ENCODE measurements at regions of chr1 and their contacts with region 1.

Region 1: DNA sequence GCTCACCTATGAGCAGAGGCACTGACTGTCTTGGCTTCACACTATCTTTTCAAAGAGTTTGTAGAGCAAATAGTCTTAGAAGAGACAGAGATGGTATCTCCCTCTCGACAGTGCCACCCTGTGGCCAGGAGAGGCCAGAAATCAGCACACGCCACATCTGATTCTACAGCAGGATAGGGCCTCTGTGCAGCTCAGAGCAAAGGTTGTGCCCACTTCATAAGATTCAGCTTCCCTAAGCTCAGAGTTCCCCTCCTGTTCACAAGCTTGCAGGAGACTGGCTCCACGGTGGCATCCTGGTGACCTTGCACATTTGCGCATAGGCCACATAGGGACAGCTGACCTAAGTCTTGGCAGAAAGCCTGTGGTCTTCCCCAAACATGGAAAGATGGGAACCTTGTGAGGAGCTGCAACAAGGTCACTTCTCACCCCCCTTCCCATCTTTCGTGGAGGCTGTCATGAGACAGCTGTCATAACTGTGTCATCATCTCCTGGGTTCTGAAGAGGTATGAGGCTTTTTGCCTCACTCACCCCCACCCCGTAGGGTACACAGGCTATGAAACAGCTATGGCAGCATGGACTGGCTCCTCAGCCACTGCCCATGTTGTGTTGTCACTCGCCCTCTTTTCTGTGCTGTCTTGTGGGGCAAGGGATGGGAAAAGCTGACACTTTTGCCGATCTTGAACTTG is 3.0 kb downstream of the ITLN2 start:
- DNase-seq: peak; percentile 68
- H3K4me3 ChIP-seq: no peak overlapping the region
- H3K27ac ChIP-seq: no peak overlapping the region
- H3K4me1 ChIP-seq: no peaks in the 10 kb centered on the region
- H3K27me3 ChIP-seq: peaks cover 4 to 10% of the 10 kb centered on the region in 2 experiments
- CTCF ChIP-seq: peak; percentile 73 to 77
- POLR2A ChIP-seq: no peak

Region 2: GRCh38 chr1:160675641-160676410 is 275.8 kb before region 1 on chr1:
- CTCF ChIA-PET with region 1: interaction called, 17 read pairs
- POLR2A ChIA-PET with region 1: no interaction called
- dilution Hi-C with region 1: no loop called
- intact Hi-C with region 1: no loop called
- DNase-seq: peak; percentile 53
- H3K4me3 ChIP-seq: no peak overlapping the region
- H3K27ac ChIP-seq: no peak overlapping the region
- H3K4me1 ChIP-seq: no peaks in the 10 kb centered on the region
- H3K27me3 ChIP-seq: peaks cover 0 to 3% of the 10 kb centered on the region in 2 experiments
- CTCF ChIP-seq: peak; percentile 69 to 80
- POLR2A ChIP-seq: no peak

Region 3: GRCh38 chr1:160726498-160727315 is 224.9 kb before region 1 on chr1:
- CTCF ChIA-PET with region 1: interaction called, 43 read pairs
- POLR2A ChIA-PET with region 1: no interaction called
- dilution Hi-C with region 1: no loop called
- intact Hi-C with region 1: loop called (anchors 2 kb)
- DNase-seq: peak; percentile 68
- H3K4me3 ChIP-seq: no peak overlapping the region
- H3K27ac ChIP-seq: no peak overlapping the region
- H3K4me1 ChIP-seq: no peaks in the 10 kb centered on the region
- H3K27me3 ChIP-seq: no peaks in the 10 kb centered on the region
- CTCF ChIP-seq: peak; percentile 76 to 77
- POLR2A ChIP-seq: no peak

Region 4: DNA sequence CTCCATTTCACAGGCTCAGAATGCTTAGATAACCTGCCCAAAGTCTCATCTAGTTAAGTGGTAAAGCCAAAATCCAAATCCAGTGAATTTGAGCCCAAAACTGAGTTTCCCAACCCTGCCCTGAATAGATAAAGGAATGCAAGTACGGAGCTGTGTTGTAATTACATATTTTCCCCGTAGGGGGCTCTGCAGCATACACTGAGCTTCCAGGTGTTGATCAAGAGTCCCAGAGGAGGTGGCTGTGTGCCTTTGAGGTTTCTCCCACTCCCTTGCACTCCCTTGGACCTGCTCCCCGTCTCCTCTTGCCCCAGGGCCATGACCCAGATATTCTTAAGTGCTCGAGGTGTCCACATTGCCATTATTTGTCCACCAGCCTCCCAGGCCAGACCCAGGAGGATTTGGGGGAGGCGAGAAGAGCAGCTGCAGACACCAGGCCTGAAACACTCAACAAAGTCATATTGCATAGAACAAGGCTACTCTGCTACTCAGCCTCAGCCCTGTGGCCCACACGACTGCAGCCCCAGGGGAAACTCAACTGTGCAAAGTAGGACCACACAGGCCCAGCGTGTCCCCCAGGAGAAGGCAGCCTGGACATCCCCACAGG is 174.0 kb before region 1 on chr1:
- CTCF ChIA-PET with region 1: interaction called, 7 read pairs
- POLR2A ChIA-PET with region 1: no interaction called
- dilution Hi-C with region 1: no loop called
- intact Hi-C with region 1: loop called (anchors 2 kb)
- DNase-seq: peak; percentile 9
- H3K4me3 ChIP-seq: no peak overlapping the region
- H3K27ac ChIP-seq: no peak overlapping the region
- H3K4me1 ChIP-seq: no peaks in the 10 kb centered on the region
- H3K27me3 ChIP-seq: no peaks in the 10 kb centered on the region
- CTCF ChIP-seq: peak; percentile 28 to 47
- POLR2A ChIP-seq: no peak

Region 5: GRCh38 chr1:160837558-160838205 is 113.9 kb before region 1 on chr1:
- CTCF ChIA-PET with region 1: interaction called, 57 read pairs
- POLR2A ChIA-PET with region 1: no interaction called
- dilution Hi-C with region 1: no loop called
- intact Hi-C with region 1: loop called (anchors 1 kb)
- DNase-seq: no peak
- H3K4me3 ChIP-seq: no peak overlapping the region
- H3K27ac ChIP-seq: no peak overlapping the region
- H3K4me1 ChIP-seq: no peaks in the 10 kb centered on the region
- H3K27me3 ChIP-seq: no peaks in the 10 kb centered on the region
- CTCF ChIP-seq: no peak
- POLR2A ChIP-seq: no peak

Region 6: DNA sequence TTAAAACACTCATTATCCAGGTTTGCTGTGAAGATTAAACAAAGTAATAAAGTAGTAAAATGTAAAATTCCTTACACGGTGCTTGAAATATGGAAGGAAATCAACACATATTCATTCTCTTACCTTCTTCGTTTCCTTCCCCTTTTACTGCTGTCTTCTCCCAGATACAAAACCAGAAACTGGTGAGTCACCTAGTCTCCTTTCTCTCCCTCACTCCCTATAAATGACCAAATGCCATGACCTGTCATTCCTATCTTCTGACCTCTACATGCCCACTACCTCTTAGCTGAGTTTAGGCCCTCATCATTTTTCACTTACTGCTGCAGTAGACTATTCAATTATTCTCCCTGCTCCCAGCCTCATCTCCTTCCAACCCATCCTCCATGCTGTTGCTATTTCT is 290.7 kb after region 1 on chr1:
- CTCF ChIA-PET with region 1: no interaction called
- POLR2A ChIA-PET with region 1: no interaction called
- dilution Hi-C with region 1: no loop called
- intact Hi-C with region 1: no loop called
- DNase-seq: no peak
- H3K4me3 ChIP-seq: no peak overlapping the region
- H3K27ac ChIP-seq: no peak overlapping the region
- H3K4me1 ChIP-seq: no peaks in the 10 kb centered on the region
- H3K27me3 ChIP-seq: peaks cover 1 to 3% of the 10 kb centered on the region in 2 experiments
- CTCF ChIP-seq: no peak
- POLR2A ChIP-seq: no peak

Measured in endothelial cell of umbilical vein (primary cell).